ENCODE measurements at regions of chr10 and their contacts with region 1.

Region 1: GRCh38 chr10:122374237-122374869 is at the start of gene PLEKHA1:
- DNase-seq: peak; percentile 94 to 97 (median 95)
- H3K4me3 ChIP-seq: peak within 1 kb of the TSS; percentile 88
- H3K27ac ChIP-seq: peak within 1 kb of the TSS; percentile 96 to 99
- H3K4me1 ChIP-seq: peaks cover 5% of the 10 kb centered on the region
- H3K27me3 ChIP-seq: no peaks in the 10 kb centered on the region
- CTCF ChIP-seq: peak in 1 of 3 donors; percentile 20
- EP300 ChIP-seq: no peak
- POLR2A ChIP-seq: peak; percentile 88
- total RNA-seq, gene PLEKHA1: 22.0 to 31.1 (median 28.4) TPM

Region 2: DNA sequence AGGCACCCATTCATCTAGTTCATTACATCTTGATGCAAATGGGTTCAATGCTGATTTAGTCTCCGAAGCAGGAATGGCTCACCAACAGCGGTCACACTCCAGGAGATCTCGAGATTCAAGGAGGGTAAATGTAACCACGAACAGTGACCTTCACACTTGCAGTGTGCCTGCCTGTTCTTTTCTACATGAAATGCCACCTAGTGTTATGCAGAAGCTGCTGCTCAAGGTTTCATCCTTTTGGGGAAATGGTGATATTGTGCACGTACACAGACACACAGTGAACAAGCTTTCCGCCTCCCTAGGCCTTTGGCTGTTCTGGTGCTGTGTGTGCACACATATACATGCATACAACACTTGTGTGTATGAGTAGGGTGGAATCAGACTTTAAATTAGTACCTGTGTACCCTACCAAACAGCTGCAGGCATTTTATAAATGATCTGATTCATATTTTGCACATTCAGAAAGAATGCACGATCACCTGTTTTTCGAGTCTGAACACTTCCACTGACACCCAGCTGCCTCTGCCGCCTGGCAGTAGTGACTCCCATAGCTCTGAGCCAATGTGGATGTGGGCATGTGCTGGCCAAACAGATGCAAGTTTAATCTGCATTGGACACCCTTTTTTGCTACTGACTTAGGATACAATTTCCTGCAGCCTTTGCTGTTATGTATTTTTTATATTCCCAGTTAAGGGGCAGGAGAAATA is 284.9 kb before region 1 on chr10:
- intact Hi-C with region 1: no loop called
- DNase-seq: no peak
- H3K4me3 ChIP-seq: no peak overlapping the region
- H3K27ac ChIP-seq: no peak overlapping the region
- H3K4me1 ChIP-seq: no peaks in the 10 kb centered on the region
- H3K27me3 ChIP-seq: no peaks in the 10 kb centered on the region
- CTCF ChIP-seq: no peak
- EP300 ChIP-seq: no peak
- POLR2A ChIP-seq: no peak

Region 3: DNA sequence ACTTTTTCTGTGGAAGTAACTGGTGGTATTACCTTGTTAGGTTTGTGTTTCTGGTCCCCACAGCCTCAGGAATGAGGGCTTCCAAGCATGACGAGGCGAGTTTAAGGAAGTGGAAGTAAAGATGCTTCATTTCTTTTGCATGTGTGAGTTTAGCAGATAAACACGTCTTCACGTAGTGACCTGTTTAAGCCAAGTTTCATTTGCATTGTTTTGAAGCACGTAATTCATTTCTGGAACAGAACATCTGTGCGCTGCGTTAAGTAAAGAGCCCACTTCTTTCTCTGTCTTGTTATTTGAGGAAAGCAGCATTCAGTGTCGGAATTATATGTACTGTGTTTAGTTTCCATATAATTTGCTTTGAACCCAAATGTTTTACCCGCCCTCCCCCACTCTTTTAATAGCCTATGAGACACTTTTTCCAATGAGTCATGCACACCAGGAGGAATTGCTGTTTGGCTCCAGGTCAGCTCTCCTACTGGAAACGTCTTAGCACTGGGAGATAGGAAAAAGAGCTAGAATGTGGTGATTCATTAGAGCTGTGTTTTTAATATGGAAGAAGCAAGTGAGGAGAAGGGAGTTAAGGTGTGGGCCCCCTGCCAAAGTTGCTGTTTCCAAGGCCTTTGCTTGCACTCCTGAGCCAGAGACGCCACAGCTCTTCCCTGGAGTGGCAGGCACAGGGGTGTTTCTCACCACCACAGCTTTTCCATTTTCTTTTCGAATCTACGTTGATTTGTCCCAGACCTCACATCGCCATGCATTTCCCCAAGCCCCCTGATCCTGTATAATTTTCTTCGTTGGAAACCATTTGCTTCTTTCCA is 66.5 kb before region 1 on chr10:
- intact Hi-C with region 1: loop called in 1 of 4 experiments (anchors 10 kb)
- DNase-seq: peak; percentile 90 to 95 (median 93)
- H3K4me3 ChIP-seq: peak overlapping the region; percentile 2
- H3K27ac ChIP-seq: peak overlapping the region; percentile 74 to 87
- H3K4me1 ChIP-seq: peaks cover 16% of the 10 kb centered on the region
- H3K27me3 ChIP-seq: no peaks in the 10 kb centered on the region
- CTCF ChIP-seq: no peak
- EP300 ChIP-seq: peak; percentile 90
- POLR2A ChIP-seq: no peak

Region 4: GRCh38 chr10:122407375-122408125 is 33.2 kb after region 1 on chr10:
- intact Hi-C with region 1: loop called in 1 of 4 experiments (anchors 2 kb)
- DNase-seq: peak in 2 of 5 donors; percentile 23 to 39
- H3K4me3 ChIP-seq: no peak overlapping the region
- H3K27ac ChIP-seq: peak overlapping the region in 1 of 2 donors; percentile 13
- H3K4me1 ChIP-seq: peaks cover 3% of the 10 kb centered on the region
- H3K27me3 ChIP-seq: no peaks in the 10 kb centered on the region
- CTCF ChIP-seq: no peak
- EP300 ChIP-seq: no peak
- POLR2A ChIP-seq: no peak

Region 5: GRCh38 chr10:122495406-122496340 is 121.3 kb after region 1 on chr10:
- intact Hi-C with region 1: no loop called
- DNase-seq: peak in 1 of 5 donors; percentile 44
- H3K4me3 ChIP-seq: no peak overlapping the region
- H3K27ac ChIP-seq: peak overlapping the region in 1 of 2 donors; percentile 5
- H3K4me1 ChIP-seq: peaks cover 27% of the 10 kb centered on the region
- H3K27me3 ChIP-seq: no peaks in the 10 kb centered on the region
- CTCF ChIP-seq: no peak
- EP300 ChIP-seq: no peak
- POLR2A ChIP-seq: no peak